CD8-positive, alpha-beta memory T cell (primary cell): ENCODE measurements at regions of chr7 and their contacts with region 1.

Region 1: DNA sequence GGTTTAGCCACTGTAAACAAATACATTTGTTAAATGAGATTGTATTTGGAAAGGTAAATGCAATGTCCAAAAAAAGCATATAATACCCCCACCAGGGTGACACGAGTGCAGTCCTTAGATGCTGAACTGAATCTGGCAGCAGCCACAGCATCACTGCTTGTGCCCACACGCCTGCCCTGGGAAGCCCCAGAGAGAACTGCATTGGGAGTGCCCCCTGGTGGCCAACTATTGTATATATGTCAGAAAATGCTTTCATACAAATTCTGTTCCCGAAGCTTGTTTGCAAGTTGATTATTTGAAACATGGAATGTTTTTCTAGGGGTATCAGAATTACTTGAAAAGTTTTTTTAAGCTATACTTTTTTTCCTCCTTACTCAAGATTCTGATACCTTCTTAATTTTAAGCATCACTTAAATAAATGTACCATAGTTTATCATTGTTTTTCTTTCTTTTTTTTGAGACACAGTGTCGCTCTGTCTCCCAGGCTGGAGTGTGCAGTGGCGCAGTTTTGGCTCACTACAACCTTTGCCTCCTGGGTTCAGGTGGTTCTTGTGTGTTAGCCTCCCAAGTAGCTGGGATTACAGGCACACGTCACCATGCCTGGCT is 50.1 kb downstream of the LANCL2 start:
- DNase-seq: peak; percentile 71 to 85 (median 73)
- H3K4me3 ChIP-seq: no peak overlapping the region
- H3K4me3 Mint-ChIP-seq: no peak overlapping the region
- H3K27ac ChIP-seq: no peak overlapping the region
- H3K27ac Mint-ChIP-seq: peak overlapping the region in 1 of 8 donors; percentile 33
- H3K4me1 ChIP-seq: no peaks in the 10 kb centered on the region
- H3K4me1 Mint-ChIP-seq: peaks cover 2 to 3% (median 3%) of the 10 kb centered on the region in 3 donors
- H3K27me3 ChIP-seq: no peaks in the 10 kb centered on the region
- H3K27me3 Mint-ChIP-seq: no peaks in the 10 kb centered on the region

Region 2: GRCh38 chr7:55280031-55280454 is 135.2 kb before region 1 on chr7:
- CTCF ChIA-PET with region 1: interaction called, 66 read pairs
- POLR2A ChIA-PET with region 1: no interaction called
- DNase-seq: peak; percentile 42 to 69 (median 56)
- H3K4me3 ChIP-seq: no peak overlapping the region
- H3K4me3 Mint-ChIP-seq: no peak overlapping the region
- H3K27ac ChIP-seq: no peak overlapping the region
- H3K27ac Mint-ChIP-seq: peak overlapping the region in 1 of 8 donors; percentile 80
- H3K4me1 ChIP-seq: no peaks in the 10 kb centered on the region
- H3K4me1 Mint-ChIP-seq: peaks cover 4 to 5% (median 5%) of the 10 kb centered on the region in 3 donors
- H3K27me3 ChIP-seq: no peaks in the 10 kb centered on the region
- H3K27me3 Mint-ChIP-seq: peaks cover 0 to 4% of the 10 kb centered on the region in 2 donors

Region 3: GRCh38 chr7:55309040-55309991 is 106.0 kb before region 1 on chr7:
- CTCF ChIA-PET with region 1: interaction called, 16 read pairs
- POLR2A ChIA-PET with region 1: no interaction called
- DNase-seq: peak; percentile 0 to 87 (median 63)
- H3K4me3 ChIP-seq: peak overlapping the region; percentile 35
- H3K4me3 Mint-ChIP-seq: peak overlapping the region; percentile 13 to 76 (median 52)
- H3K27ac ChIP-seq: peak overlapping the region; percentile 52
- H3K27ac Mint-ChIP-seq: peak overlapping the region; percentile 88 to 97 (median 95)
- H3K4me1 ChIP-seq: peaks cover 32% of the 10 kb centered on the region
- H3K4me1 Mint-ChIP-seq: peaks cover 52 to 72% (median 57%) of the 10 kb centered on the region in 3 donors
- H3K27me3 ChIP-seq: no peaks in the 10 kb centered on the region
- H3K27me3 Mint-ChIP-seq: peaks cover 0 to 4% of the 10 kb centered on the region in 2 donors

Region 4: DNA sequence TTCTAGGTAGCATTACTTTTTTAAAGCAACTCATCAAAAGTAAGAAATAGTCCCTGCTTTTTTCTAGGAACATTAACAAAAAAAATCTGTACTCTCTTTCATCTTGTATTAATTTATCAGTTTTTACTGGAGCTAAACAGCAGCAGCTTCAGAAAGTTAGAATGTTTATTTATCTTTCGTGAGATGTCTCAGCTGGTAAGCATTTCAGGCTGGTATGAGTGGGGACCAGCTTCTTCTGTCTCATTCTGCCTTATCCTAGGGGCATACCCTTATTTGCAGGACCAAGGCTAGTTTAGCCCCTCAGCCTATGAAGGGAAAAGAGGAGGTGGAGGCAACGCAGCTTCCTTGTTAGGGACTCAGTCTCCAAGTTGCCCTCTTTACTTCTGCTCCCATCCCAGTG is 15.1 kb before region 1 on chr7:
- CTCF ChIA-PET with region 1: interaction called, 10 read pairs
- POLR2A ChIA-PET with region 1: no interaction called
- DNase-seq: no peak
- H3K4me3 ChIP-seq: no peak overlapping the region
- H3K4me3 Mint-ChIP-seq: no peak overlapping the region
- H3K27ac ChIP-seq: no peak overlapping the region
- H3K27ac Mint-ChIP-seq: no peak overlapping the region
- H3K4me1 ChIP-seq: no peaks in the 10 kb centered on the region
- H3K4me1 Mint-ChIP-seq: no peaks in the 10 kb centered on the region
- H3K27me3 ChIP-seq: no peaks in the 10 kb centered on the region
- H3K27me3 Mint-ChIP-seq: no peaks in the 10 kb centered on the region

Region 5: GRCh38 chr7:55912748-55913158 is 497.5 kb after region 1 on chr7:
- CTCF ChIA-PET with region 1: no interaction called
- POLR2A ChIA-PET with region 1: no interaction called
- DNase-seq: no peak
- H3K4me3 ChIP-seq: no peak overlapping the region
- H3K4me3 Mint-ChIP-seq: no peak overlapping the region
- H3K27ac ChIP-seq: no peak overlapping the region
- H3K27ac Mint-ChIP-seq: no peak overlapping the region
- H3K4me1 ChIP-seq: no peaks in the 10 kb centered on the region
- H3K4me1 Mint-ChIP-seq: no peaks in the 10 kb centered on the region
- H3K27me3 ChIP-seq: no peaks in the 10 kb centered on the region
- H3K27me3 Mint-ChIP-seq: peaks cover 0 to 2% of the 10 kb centered on the region in 2 donors